Common myeloid progenitor, CD34-positive (primary cell): ENCODE measurements at regions of chr12 and their contacts with region 1.

Region 1: DNA sequence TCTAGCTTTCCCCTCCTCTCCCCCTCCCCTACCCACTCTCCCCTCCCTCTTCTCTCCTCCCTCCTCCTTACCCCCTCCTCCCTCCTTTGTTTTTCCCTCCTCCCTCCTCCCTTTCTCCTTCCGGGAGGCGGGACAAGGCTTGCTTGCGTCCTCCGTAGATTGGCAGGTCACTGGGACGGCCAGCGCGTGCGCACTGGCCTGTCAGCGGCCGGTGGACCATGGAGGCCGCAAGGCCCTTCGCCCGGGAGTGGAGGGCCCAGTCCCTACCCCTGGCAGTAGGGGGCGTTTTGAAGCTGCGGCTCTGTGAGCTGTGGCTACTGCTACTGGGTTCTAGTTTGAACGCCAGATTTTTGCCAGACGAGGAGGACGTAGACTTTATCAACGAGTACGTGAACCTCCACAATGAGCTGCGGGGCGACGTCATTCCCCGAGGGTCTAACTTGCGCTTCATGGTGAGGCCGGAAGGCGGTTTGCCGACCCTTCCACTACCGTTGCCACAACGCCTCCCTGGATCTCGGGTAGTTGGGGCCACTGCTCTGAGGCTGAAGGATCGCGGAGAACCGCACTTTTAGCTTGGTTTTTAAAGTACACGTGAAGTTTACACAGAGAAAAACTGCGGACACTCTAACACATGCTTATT is at the start of gene GLIPR1L2:
- DNase-seq: peak; percentile 98
- H3K4me3 ChIP-seq: peak within 1 kb of the TSS in 6 of 7 experiments; percentile 67 to 92 (median 74)
- H3K27ac ChIP-seq: peak within 1 kb of the TSS; percentile 66 to 82
- H3K4me1 ChIP-seq: peaks cover 7 to 52% (median 19%) of the 10 kb centered on the region in 4 experiments
- H3K27me3 ChIP-seq: no peaks in the 10 kb centered on the region

Region 2: DNA sequence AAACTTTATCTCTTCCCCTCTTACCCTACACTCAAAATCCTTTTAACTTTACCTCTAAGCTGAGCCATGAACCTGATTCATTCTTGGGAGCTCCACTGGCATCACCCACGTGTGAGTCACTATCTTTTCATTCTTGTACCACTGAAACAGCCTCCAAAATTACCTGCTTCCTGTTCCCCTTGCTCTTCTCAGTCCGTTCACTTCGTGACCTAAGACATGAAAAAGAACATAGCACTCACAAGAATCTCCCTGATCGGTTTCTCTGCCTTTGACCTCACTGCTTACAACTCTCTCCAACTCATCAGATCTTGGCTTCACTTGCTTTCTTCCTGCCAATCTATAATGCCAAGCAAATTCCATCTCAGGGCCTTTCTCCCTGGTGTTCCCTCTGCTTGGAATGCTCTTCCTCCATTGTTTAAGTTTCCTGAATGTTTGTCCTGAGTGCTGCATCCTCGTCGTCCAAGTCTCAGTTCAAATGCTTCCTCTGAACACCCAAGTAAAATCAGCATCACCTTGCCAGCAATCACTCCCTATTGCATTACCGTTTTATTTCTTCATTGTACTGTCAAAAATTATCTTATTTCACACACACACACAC is 98.7 kb after region 1 on chr12:
- CTCF ChIA-PET with region 1: interaction called, 36 read pairs
- POLR2A ChIA-PET with region 1: interaction called, 4 read pairs
- DNase-seq: peak in 2 of 3 donors; percentile 35
- H3K4me3 ChIP-seq: no peak overlapping the region
- H3K27ac ChIP-seq: no peak overlapping the region
- H3K4me1 ChIP-seq: peaks cover 6 to 34% (median 13%) of the 10 kb centered on the region in 4 experiments
- H3K27me3 ChIP-seq: no peaks in the 10 kb centered on the region

Region 3: DNA sequence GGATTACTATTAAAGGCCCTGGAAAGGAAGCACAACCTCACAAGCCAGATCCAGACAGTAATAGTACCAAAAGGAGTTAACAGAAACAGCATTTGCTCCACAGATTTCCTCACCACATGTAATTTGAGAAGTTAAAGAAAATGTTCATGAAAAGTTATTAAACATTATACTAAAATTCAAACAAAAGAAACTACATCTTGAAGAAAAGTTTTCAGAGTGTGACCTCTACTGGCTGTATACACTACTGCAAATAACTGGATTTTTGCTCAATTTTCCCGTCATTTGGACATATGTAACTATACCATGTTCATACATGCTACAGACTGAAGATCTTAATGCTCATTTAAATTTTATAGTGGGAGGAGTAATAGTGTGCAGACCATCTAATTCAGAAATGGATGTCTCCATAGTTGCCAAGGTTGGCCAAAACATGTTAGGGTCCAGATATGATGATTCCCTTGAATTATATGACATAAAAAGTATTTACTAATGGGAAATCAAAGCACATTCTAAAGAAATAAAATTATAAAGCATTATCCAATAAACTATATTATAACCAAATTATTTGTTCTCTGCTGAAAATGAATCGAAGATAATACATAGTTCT is 114.8 kb after region 1 on chr12:
- CTCF ChIA-PET with region 1: interaction called, 11 read pairs
- POLR2A ChIA-PET with region 1: no interaction called
- DNase-seq: peak; percentile 54 to 77 (median 73)
- H3K4me3 ChIP-seq: no peak overlapping the region
- H3K27ac ChIP-seq: no peak overlapping the region
- H3K4me1 ChIP-seq: peaks cover 10 to 18% (median 11%) of the 10 kb centered on the region in 4 experiments
- H3K27me3 ChIP-seq: no peaks in the 10 kb centered on the region